ENCODE measurements at regions of chr2 and their contacts with region 1.

Region 1: GRCh38 chr2:159807183-159808031 is 9.4 kb upstream of the CD302 start:
- DNase-seq: peak; percentile 69
- H3K4me3 ChIP-seq: peak overlapping the region in 1 of 2 experiments; percentile 48; a peak in 1 of 4 replicates
- H3K27ac ChIP-seq: no peak overlapping the region
- H3K4me1 ChIP-seq: peaks cover 0 to 5% of the 10 kb centered on the region in 2 experiments; a peak in 2 of 4 replicates
- H3K27me3 ChIP-seq: no peaks in the 10 kb centered on the region
- CTCF ChIP-seq: peak; percentile 79
- EP300 ChIP-seq: no peak
- RAD21 ChIP-seq: peak; percentile 79

Region 2: GRCh38 chr2:159939946-159940345 is 132.5 kb after region 1 on chr2:
- CTCF ChIA-PET with region 1: interaction called, 10 read pairs
- POLR2A ChIA-PET with region 1: no interaction called
- DNase-seq: peak; percentile 36
- H3K4me3 ChIP-seq: no peak overlapping the region
- H3K27ac ChIP-seq: no peak overlapping the region
- H3K4me1 ChIP-seq: no peaks in the 10 kb centered on the region; a peak in 1 of 4 replicates
- H3K27me3 ChIP-seq: no peaks in the 10 kb centered on the region
- CTCF ChIP-seq: peak; percentile 49
- EP300 ChIP-seq: no peak
- RAD21 ChIP-seq: peak; percentile 76